ENCODE measurements at regions of chr12 and their contacts with region 1.

Region 1: DNA sequence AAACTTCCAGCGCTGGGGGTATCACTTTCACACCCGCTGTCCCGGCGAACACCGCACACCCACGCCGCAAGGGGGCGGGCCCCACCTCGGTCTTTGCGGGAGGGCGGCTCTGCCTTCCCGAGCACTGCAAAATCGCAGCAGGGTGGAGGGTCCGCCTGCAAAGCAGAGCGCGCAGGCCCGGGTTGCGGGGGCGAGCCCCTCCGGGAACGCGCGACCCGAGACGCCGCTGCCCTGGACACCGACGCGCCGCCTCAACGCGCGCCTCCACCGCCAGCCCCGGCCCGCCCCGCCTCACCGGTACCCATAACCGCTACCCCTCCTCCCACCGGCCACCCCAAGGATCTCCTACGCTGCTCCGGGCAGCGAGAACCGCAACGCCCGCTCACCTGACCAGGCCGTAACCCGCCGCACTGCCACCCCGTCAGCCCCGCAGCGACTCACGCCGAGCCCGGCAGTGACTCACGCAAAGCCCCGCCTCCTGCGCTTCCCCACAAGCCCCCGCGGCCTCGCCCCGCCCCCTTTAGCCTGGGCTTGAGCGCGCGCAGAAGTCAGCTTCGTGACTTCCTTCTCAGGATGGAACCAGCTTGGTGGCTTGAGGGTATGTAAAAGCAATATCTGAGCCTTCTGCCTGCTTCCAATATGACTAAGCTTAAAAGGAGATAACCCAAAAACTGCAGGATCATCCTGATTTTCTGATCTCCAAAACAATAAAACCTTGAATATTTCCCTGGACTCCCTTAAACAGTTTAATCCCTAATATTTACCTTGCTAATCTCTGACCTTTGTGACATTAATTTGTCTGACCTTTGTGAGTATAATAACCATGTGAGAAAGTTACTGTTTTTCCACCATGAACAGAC is at the start of gene RPAP3:
- DNase-seq: peak; percentile 96
- H3K4me3 Mint-ChIP-seq: peak within 1 kb of the TSS; percentile 96
- H3K27ac Mint-ChIP-seq: peak within 1 kb of the TSS; percentile 98
- H3K4me1 Mint-ChIP-seq: peaks cover 55% of the 10 kb centered on the region
- H3K27me3 Mint-ChIP-seq: no peaks in the 10 kb centered on the region
- total RNA-seq, gene RPAP3: 57.4 and 58.7 TPM in 2 replicates

Region 2: GRCh38 chr12:45728630-45729232 is 1977.1 kb before region 1 on chr12:
- intact Hi-C with region 1: loop called (anchors 5 kb)
- DNase-seq: peak; percentile 96
- H3K4me3 Mint-ChIP-seq: peak overlapping the region; percentile 100
- H3K27ac Mint-ChIP-seq: peak overlapping the region; percentile 100
- H3K4me1 Mint-ChIP-seq: peaks cover 31% of the 10 kb centered on the region
- H3K27me3 Mint-ChIP-seq: no peaks in the 10 kb centered on the region

Region 3: DNA sequence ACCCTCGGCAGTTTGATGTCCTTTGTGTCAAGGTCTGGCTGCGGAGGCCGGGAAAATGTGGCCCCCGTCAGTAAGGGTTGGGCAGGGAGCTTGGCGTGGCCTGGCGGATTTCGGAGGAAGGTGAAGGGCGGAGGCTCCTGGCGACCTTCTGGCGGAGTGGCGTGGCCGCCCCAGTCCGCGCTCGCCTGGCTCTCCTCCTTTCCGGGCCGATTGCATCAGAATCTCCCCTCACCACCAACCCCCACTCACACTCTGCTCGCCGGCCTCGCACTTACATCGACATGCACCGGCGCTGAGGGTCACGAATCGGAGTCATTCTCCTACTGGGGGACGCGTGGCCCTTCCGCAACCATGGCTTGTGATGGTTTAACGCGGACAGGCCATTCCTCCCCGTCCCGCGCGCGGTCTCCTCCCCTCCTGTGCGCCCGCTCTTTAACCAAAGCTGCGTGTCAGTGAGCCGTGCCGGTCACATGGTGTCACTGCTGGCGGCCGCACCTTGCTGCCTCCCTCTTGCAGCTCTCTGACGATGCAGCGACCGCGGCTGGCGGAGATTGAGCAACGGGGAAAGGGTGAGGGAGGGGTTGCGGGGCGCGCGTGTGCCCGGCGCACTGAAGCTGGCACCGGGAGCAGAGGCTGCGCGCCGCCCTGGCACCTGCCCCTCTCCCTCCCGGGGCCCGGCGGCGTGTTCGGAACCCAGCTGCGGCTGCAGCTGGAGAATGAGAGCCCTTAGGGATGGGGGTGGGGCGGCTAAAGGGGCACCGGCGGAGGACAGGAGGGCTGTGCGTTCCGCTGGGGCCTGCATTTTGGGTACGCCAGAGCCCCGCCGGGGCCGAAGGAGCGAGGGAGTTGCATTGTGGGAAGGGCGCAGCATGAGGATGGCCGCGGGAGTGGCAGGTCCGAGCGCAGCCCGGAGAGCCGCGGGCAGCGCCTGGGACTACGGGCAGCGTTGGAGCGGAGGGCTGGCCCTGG is 1436.9 kb before region 1 on chr12 and contains the start of gene SLC38A1:
- intact Hi-C with region 1: loop called (anchors 5 kb)
- DNase-seq: peak; percentile 86
- H3K4me3 Mint-ChIP-seq: no peak within 1 kb of the TSS
- H3K27ac Mint-ChIP-seq: no peak within 1 kb of the TSS
- H3K4me1 Mint-ChIP-seq: peaks cover 26% of the 10 kb centered on the region
- H3K27me3 Mint-ChIP-seq: no peaks in the 10 kb centered on the region
- total RNA-seq, gene SLC38A1: 152 and 154 TPM in 2 replicates

Region 4: DNA sequence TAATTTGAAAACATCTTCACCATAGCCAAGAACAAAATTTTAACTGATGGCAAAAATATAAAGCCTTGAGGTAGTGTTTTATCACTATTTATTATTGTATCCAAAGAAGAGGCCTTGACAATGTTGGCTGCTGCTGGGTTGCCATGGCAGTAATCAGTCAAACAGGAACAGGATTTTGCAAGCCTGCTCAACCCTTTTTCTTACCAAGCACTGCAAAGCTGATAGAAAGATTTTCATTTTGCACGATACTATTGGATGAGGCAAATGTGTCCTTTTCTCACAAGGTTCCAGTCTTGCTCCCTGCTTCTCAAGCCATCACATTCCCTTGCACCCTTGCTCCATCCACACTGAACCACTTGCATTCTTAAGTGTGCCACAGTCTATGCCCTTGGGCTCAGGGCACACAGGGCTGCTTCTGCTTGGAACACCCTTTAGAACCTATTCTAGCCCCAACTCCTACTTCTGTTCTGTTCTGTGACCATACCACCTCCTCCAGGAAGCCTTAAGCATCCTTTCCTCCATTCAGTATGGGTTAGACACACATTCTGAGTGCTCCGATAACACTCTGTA is 549.5 kb before region 1 on chr12:
- intact Hi-C with region 1: no loop called
- DNase-seq: no peak
- H3K4me3 Mint-ChIP-seq: no peak overlapping the region
- H3K27ac Mint-ChIP-seq: no peak overlapping the region
- H3K4me1 Mint-ChIP-seq: peaks cover 18% of the 10 kb centered on the region
- H3K27me3 Mint-ChIP-seq: no peaks in the 10 kb centered on the region

Region 5: GRCh38 chr12:47216150-47216677 is 489.6 kb before region 1 on chr12:
- intact Hi-C with region 1: loop called (anchors 5 kb)
- DNase-seq: peak; percentile 72
- H3K4me3 Mint-ChIP-seq: peak overlapping the region; percentile 97
- H3K27ac Mint-ChIP-seq: peak overlapping the region; percentile 96
- H3K4me1 Mint-ChIP-seq: peaks cover 52% of the 10 kb centered on the region
- H3K27me3 Mint-ChIP-seq: no peaks in the 10 kb centered on the region

Region 6: DNA sequence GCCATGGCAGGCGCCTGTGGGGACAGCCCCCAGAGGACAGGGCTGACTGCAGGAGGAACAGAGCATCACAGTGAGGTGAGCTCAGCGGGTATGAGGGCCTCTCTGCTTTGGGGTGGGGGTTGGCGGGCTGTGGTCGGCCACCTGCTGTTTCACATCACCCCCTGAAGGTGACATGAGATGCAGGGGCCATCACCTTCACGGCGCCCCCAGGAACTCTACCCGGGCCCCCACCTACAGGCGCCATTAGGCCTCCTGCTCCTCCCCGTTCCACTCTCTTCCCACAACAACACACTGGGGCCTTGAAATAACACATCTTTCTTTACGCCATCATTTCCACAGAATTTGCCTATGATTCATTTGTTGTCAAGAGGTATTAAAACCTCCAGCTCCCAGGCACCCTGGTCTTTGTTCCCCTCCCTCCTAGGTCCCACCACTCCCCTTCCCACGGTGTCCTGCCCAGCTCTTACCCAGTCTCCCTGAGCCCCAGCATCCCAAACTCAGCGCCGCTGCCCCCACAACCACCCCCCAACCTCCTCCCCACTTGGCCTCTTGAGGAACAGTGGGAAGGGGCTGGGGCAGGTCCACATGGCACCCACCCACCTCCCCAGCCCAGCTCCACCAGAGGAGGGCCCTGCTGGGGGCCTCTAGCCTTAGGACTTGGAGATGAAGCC is 126.6 kb after region 1 on chr12:
- intact Hi-C with region 1: loop called (anchors 2 kb)
- DNase-seq: no peak
- H3K4me3 Mint-ChIP-seq: peak overlapping the region; percentile 76
- H3K27ac Mint-ChIP-seq: peak overlapping the region; percentile 98
- H3K4me1 Mint-ChIP-seq: peaks cover 76% of the 10 kb centered on the region
- H3K27me3 Mint-ChIP-seq: no peaks in the 10 kb centered on the region

Region 7: GRCh38 chr12:47963340-47964040 is 257.7 kb after region 1 on chr12 and contains the start of gene TMEM106C:
- intact Hi-C with region 1: loop called (anchors 10 kb)
- DNase-seq: peak; percentile 89
- H3K4me3 Mint-ChIP-seq: peak within 1 kb of the TSS; percentile 95
- H3K27ac Mint-ChIP-seq: peak within 1 kb of the TSS; percentile 81
- H3K4me1 Mint-ChIP-seq: peaks cover 30% of the 10 kb centered on the region
- H3K27me3 Mint-ChIP-seq: peaks cover 27% of the 10 kb centered on the region
- total RNA-seq, gene TMEM106C: 168 and 169 TPM in 2 replicates